ENCODE measurements at regions of chr10 and their contacts with region 1.

Region 1: DNA sequence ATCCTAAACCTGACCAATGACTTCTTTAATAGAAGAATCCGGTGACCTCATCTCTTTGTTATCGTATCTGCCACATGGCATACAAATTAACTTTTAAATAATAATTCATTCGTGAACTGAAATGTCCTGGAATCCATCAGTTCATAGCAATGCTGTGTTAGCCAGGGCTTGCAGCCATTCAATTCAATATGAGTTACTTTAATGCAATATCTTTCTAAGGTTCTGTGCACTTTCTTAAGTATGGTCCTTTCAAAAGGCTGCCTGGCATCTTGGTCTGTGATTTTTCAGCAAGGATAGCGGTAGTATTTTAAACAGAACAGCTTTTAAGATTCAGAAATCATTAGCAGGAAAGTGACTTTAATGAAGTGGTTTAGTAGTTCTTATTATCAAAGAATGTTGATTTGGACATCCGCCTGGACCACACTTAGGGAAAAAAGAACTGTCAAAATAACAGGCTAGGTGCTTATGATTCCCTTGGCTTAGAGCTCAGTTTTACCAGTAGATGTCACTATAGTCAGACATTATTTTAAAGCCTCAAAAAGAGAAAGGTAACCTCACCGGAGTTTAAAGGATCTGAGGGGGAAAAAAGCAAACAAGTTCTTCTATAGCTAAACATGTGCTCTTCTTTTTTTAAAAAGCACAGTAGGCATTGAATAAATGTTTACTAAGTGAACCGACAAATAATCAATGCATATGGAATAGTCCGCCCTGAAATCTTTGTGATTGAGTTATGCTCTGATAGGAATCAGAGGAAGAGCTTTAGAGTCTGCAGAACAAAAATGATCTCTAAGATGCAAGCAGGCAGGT is 22.7 kb downstream of the SLC35G1 start:
- DNase-seq: no peak
- H3K4me3 ChIP-seq: no peak overlapping the region
- H3K27ac ChIP-seq: no peak overlapping the region
- H3K4me1 ChIP-seq: peaks cover 4% of the 10 kb centered on the region
- H3K27me3 ChIP-seq: no peaks in the 10 kb centered on the region
- CTCF ChIP-seq: peak in 2 of 3 donors; percentile 31 to 49
- EP300 ChIP-seq: no peak
- POLR2A ChIP-seq: no peak

Region 2: DNA sequence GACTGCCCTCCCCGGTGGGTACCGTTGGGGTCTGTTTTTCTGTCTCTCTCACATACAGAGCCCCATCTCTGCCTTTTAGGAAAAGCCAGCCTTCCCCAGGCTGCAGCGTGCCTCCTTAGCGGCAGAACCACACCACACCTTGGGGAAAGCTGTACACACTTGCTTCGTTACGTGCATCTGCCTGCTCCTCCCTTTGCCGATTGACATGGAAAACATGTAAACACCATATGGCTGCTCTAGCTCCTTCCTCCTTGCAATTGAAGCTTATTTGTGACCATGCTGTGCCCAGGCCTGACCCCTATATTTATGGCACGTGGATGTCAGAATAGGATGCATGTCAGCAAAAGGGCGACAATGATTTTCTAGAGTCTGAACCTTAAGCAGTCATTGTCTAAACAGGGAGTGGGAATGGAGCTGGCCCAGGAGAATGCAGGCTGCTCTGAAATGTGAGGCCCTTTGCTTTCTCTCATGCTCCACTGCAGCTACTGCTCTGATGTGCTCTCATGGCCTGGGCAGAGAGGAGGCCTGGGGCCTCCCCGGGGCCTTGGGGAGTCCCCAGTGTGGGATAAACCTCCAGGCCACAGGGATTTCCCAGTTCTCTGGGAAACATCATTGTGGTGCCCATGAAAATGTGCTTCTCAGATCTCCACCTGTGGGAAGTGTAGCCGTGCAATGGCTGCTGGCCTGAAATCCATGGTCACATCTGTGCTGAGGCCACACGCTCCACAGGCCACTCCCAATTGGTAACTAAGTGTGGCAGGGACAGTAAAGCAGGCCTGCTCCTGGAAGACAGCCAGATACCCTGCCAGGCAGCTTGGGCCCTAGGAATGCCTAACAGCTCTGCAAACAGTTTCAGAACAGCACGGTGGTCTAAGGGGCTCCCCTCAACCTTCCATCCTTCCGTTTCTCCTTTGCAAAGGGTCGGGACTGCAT is 285.6 kb before region 1 on chr10:
- intact Hi-C with region 1: no loop called
- DNase-seq: no peak
- H3K4me3 ChIP-seq: no peak overlapping the region
- H3K27ac ChIP-seq: no peak overlapping the region
- H3K4me1 ChIP-seq: no peaks in the 10 kb centered on the region
- H3K27me3 ChIP-seq: no peaks in the 10 kb centered on the region
- CTCF ChIP-seq: no peak
- EP300 ChIP-seq: no peak
- POLR2A ChIP-seq: no peak

Region 3: GRCh38 chr10:94069884-94070283 is 153.4 kb after region 1 on chr10:
- intact Hi-C with region 1: loop called in 2 of 4 experiments (anchors 5 to 10 kb)
- DNase-seq: no peak
- H3K4me3 ChIP-seq: no peak overlapping the region
- H3K27ac ChIP-seq: no peak overlapping the region
- H3K4me1 ChIP-seq: no peaks in the 10 kb centered on the region
- H3K27me3 ChIP-seq: no peaks in the 10 kb centered on the region
- CTCF ChIP-seq: no peak
- EP300 ChIP-seq: no peak
- POLR2A ChIP-seq: no peak

Region 4: GRCh38 chr10:94076321-94076841 is 159.9 kb after region 1 on chr10:
- intact Hi-C with region 1: loop called in 2 of 4 experiments (anchors 5 to 10 kb)
- DNase-seq: peak in 3 of 5 donors; percentile 13 to 37 (median 24)
- H3K4me3 ChIP-seq: no peak overlapping the region
- H3K27ac ChIP-seq: no peak overlapping the region
- H3K4me1 ChIP-seq: no peaks in the 10 kb centered on the region
- H3K27me3 ChIP-seq: no peaks in the 10 kb centered on the region
- CTCF ChIP-seq: peak in 2 of 3 donors; percentile 25 to 72
- EP300 ChIP-seq: no peak
- POLR2A ChIP-seq: no peak

Region 5: GRCh38 chr10:94315024-94315451 is 398.6 kb after region 1 on chr10:
- intact Hi-C with region 1: loop called in 3 of 4 experiments (anchors 5 to 10 kb)
- DNase-seq: no peak
- H3K4me3 ChIP-seq: no peak overlapping the region
- H3K27ac ChIP-seq: no peak overlapping the region
- H3K4me1 ChIP-seq: peaks cover 3% of the 10 kb centered on the region
- H3K27me3 ChIP-seq: no peaks in the 10 kb centered on the region
- CTCF ChIP-seq: no peak
- EP300 ChIP-seq: no peak
- POLR2A ChIP-seq: no peak

Region 6: DNA sequence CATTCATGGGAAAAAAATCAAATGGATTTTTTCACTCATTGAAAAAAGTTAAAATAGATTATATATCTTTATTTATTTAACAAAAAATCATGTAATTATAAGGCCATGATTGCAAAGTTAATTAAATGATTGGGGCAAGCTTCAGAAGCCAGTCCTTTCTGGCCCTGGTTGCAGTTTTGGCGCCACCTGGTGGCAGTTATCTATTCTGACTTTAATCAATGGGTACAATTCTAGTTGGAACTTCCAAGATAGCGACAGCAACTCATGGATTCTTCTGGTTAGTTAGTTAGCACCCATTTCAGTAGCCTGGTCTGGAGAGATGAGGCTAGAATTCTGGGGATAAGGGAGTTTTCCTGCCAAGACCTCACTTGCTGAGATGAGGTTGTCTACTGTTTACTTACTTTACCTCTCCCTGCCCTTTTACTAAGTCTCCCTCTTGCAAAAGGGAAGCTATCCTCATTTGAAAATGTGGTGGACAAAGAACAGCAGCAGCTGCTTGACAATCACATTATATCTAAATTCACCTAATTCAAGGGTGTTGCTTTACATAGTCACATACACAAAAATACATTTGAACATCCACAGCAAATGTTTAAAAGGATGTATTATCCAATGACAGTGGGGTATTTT is 403.9 kb after region 1 on chr10:
- intact Hi-C with region 1: loop called in 3 of 4 experiments (anchors 5 to 10 kb)
- DNase-seq: peak; percentile 55 to 78 (median 71)
- H3K4me3 ChIP-seq: no peak overlapping the region
- H3K27ac ChIP-seq: no peak overlapping the region
- H3K4me1 ChIP-seq: peaks cover 2% of the 10 kb centered on the region
- H3K27me3 ChIP-seq: no peaks in the 10 kb centered on the region
- CTCF ChIP-seq: peak; percentile 64 to 78 (median 78)
- EP300 ChIP-seq: no peak
- POLR2A ChIP-seq: no peak

Region 7: DNA sequence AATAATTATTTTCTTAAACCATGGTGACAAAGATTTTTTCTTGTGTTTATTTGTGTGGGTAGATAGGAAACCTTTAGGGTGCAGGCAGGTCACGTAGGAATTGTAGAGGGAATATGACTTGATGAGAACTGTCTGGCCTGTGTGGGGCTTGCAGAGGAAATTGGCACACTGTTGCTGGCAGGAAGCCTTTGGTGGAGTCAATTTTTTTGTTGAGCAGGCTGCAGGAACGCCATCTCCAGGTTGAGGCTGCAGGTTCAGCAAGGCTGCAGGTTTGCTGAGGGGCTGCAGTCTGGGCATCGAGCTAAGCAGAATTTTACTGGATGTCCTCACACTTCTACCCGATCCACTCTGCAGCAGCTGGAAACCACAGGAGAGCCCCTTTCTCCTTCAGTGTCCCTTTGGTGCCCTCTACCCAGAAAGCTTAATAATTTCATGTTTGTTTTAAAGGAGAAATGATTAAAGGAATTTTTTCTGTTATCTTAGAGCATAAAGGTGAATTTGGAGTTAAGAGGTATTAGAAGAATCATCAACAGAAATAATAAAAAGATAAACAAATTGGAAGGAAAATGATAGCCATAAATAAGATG is 522.9 kb after region 1 on chr10:
- intact Hi-C with region 1: loop called in 2 of 4 experiments (anchors 10 kb)
- DNase-seq: no peak
- H3K4me3 ChIP-seq: no peak overlapping the region
- H3K27ac ChIP-seq: no peak overlapping the region
- H3K4me1 ChIP-seq: no peaks in the 10 kb centered on the region
- H3K27me3 ChIP-seq: no peaks in the 10 kb centered on the region
- CTCF ChIP-seq: no peak
- EP300 ChIP-seq: no peak
- POLR2A ChIP-seq: no peak

Measured in ovary (tissue), 10 donors.